ENCODE measurements at regions of chr18 and their contacts with region 1.

Region 1: DNA sequence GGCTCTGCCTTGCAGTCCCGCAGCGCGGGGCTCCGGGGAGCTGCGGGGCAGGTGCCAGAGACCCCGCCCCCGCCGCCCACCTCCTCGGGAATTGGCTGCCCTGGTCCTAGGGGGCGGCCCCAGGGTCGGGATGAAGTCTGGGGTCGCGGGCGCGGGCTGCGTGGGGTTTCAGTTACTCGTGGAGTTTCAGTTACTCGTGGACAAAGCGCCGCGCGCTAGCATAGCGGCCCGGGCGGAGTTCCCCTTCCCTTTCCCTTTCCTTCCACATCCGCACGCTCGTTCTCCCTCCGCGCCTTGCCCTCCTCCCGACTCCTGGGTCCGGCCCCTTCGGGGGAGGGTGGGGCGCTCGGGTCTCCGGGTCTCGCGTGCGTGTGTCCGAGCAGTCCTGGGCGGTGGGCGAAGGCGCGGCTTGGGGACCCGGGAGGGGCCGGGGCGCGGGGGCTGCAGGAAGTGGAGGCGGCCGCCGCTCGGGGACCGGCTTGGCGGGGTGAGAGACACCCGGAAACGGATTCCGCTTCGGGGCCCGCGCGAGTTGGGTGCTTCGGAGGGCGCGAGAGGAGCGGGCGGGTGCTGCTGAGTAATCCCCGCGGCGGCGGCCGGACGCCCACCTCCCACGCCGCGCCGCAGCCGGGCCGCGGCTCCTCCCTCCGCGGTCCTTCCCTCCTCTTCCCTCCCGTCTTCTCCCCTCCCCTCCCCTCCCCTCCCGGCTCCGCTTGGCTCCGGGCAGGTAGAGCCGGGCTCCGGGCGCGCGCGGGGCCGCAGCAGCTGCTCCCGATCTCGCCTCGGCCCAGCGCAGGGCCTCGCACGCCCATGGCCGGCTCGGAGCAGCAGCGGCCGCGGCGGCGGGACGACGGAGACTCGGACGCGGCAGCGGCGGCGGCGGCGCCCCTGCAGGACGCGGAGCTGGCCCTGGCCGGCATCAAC is at the start of gene TTC39C:
- DNase-seq: peak; percentile 79
- H3K4me3 Mint-ChIP-seq: peak within 1 kb of the TSS; percentile 92
- H3K27ac Mint-ChIP-seq: peak within 1 kb of the TSS; percentile 86
- H3K4me1 Mint-ChIP-seq: peaks cover 77% of the 10 kb centered on the region
- H3K27me3 Mint-ChIP-seq: no peaks in the 10 kb centered on the region
- total RNA-seq, gene TTC39C: 28.8 and 31.8 TPM in 2 replicates

Region 2: GRCh38 chr18:23071285-23071684 is 943.0 kb before region 1 on chr18:
- intact Hi-C with region 1: loop called (anchors 10 kb)
- DNase-seq: peak; percentile 86
- H3K4me3 Mint-ChIP-seq: peak overlapping the region; percentile 63
- H3K27ac Mint-ChIP-seq: peak overlapping the region; percentile 97
- H3K4me1 Mint-ChIP-seq: peaks cover 60% of the 10 kb centered on the region
- H3K27me3 Mint-ChIP-seq: peaks cover 2% of the 10 kb centered on the region

Region 3: GRCh38 chr18:23503038-23503962 is 511.0 kb before region 1 on chr18 and contains the start of gene RMC1:
- intact Hi-C with region 1: loop called (anchors 5 kb)
- DNase-seq: peak; percentile 96
- H3K4me3 Mint-ChIP-seq: peak within 1 kb of the TSS; percentile 97
- H3K27ac Mint-ChIP-seq: peak within 1 kb of the TSS; percentile 91
- H3K4me1 Mint-ChIP-seq: peaks cover 66% of the 10 kb centered on the region
- H3K27me3 Mint-ChIP-seq: no peaks in the 10 kb centered on the region
- total RNA-seq, gene RMC1: 56.3 and 56.7 TPM in 2 replicates

Region 4: DNA sequence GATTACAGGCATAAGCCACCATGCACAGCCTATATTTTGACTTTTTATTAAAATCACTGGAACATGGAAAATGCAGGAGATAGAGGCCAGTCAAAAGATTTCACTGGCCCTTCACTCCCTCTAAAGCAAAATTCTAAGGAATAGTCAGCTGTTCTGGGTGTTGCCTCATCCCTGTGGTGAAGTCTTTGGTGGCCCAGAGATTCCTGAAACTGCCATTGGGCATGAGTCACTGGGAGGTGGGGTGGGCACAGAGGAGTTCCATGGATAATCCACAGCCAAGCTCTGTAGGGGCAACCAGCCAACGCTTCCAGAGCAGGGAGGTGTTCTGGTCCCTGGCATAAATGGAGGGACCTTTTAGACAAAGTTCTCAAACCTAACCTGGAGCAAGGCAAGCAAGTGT is 89.5 kb before region 1 on chr18:
- intact Hi-C with region 1: loop called (anchors 5 kb)
- DNase-seq: no peak
- H3K4me3 Mint-ChIP-seq: no peak overlapping the region
- H3K27ac Mint-ChIP-seq: no peak overlapping the region
- H3K4me1 Mint-ChIP-seq: peaks cover 35% of the 10 kb centered on the region
- H3K27me3 Mint-ChIP-seq: peaks cover 5% of the 10 kb centered on the region

Region 5: DNA sequence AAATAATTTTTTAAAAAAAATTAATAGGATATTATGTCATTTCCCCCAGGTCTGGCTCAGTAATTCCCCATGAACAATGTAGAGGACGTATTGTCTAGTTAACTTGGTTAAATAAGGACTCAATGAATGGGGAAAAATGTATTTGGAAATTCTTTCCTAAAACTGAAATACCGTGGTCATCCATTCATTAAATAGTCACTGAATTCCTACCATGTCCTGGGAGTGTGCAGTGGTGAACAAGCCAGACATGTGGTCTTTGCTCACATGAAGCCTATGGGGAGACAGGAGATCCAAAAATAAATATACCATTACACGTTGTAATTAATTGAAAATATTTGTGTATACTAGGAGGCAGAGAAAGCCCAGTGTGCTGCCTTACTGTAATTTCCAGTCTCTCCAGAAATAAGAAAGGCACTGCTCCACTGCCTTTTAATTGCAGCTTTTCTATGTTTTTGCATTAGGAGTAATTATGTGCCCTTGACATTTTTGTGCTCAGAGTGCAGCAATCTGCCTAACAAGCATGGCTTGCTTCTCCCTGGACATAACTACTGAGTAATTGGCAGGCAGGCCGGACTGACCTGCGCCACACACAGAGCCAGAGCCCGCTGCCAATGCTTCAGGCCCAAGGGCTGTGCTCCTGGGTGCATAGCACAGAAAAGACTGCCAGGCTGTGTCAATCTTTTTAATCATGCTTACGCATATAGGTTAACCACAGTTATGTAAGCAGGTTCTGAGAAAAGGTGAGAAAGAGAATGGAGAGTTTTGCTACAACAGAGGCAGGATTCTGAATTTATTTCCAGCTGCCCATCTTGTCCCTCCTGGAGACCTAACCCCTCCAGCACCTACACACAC is 22.0 kb before region 1 on chr18:
- intact Hi-C with region 1: loop called (anchors 1 kb)
- DNase-seq: peak; percentile 28
- H3K4me3 Mint-ChIP-seq: peak overlapping the region; percentile 24
- H3K27ac Mint-ChIP-seq: peak overlapping the region; percentile 27
- H3K4me1 Mint-ChIP-seq: peaks cover 35% of the 10 kb centered on the region
- H3K27me3 Mint-ChIP-seq: peaks cover 5% of the 10 kb centered on the region

Region 6: GRCh38 chr18:24138789-24139616 is 124.7 kb after region 1 on chr18 and contains the start of gene CABYR:
- intact Hi-C with region 1: loop called (anchors 5 kb)
- DNase-seq: peak; percentile 60
- H3K4me3 Mint-ChIP-seq: peak within 1 kb of the TSS; percentile 86
- H3K27ac Mint-ChIP-seq: peak within 1 kb of the TSS; percentile 48
- H3K4me1 Mint-ChIP-seq: peaks cover 25% of the 10 kb centered on the region
- H3K27me3 Mint-ChIP-seq: peaks cover 23% of the 10 kb centered on the region
- total RNA-seq, gene CABYR: 0.49 and 1.1 TPM in 2 replicates

Region 7: GRCh38 chr18:24246143-24246542 is 231.8 kb after region 1 on chr18:
- intact Hi-C with region 1: no loop called
- DNase-seq: peak; percentile 2
- H3K4me3 Mint-ChIP-seq: no peak overlapping the region
- H3K27ac Mint-ChIP-seq: peak overlapping the region; percentile 19
- H3K4me1 Mint-ChIP-seq: no peaks in the 10 kb centered on the region
- H3K27me3 Mint-ChIP-seq: peaks cover 6% of the 10 kb centered on the region

Region 8: GRCh38 chr18:24627644-24628315 is 613.5 kb after region 1 on chr18:
- intact Hi-C with region 1: no loop called
- DNase-seq: no peak
- H3K4me3 Mint-ChIP-seq: no peak overlapping the region
- H3K27ac Mint-ChIP-seq: no peak overlapping the region
- H3K4me1 Mint-ChIP-seq: no peaks in the 10 kb centered on the region
- H3K27me3 Mint-ChIP-seq: no peaks in the 10 kb centered on the region

Region 9: DNA sequence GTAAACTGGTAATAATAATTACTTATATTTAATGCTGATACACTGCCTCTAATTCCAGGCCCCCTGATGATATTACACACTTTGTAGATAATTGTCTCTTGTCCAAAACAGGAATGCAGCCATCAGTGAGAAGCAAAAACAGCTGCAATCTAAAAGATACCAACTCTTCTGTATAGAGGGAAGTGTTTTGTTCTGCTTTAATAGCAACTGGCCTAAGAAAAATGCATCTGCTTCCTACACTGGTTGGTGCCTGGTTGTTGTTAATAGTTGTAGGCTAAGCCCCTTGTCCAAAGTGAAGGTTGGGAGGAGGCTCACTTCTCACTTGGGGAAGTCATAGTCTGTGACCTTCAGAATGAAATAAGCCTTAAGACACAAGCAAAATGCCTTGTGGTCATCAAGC is 1005.6 kb after region 1 on chr18:
- intact Hi-C with region 1: no loop called
- DNase-seq: no peak
- H3K4me3 Mint-ChIP-seq: no peak overlapping the region
- H3K27ac Mint-ChIP-seq: no peak overlapping the region
- H3K4me1 Mint-ChIP-seq: no peaks in the 10 kb centered on the region
- H3K27me3 Mint-ChIP-seq: no peaks in the 10 kb centered on the region

Measured in activated T-helper 1 cell treated with anti-CD3 and anti-CD28 coated beads, Interleukin-12 subunit alpha, Interleukin-12 subunit beta, Interleukin-2, Interleukin-4 antibody, amounts not matched to agents 30 ng/mL and 10 ng/mL and 1 ng/mL, durations not matched to agents 14 hours and 24 hours and 36 hours (primary cell).